GM12878 (cell line): ENCODE measurements at regions of chr6 and their contacts with region 1.

Region 1: GRCh38 chr6:158417760-158418098 is 105.5 kb downstream of the TULP4 start:
- DNase-seq: no peak
- ATAC-seq: no peak
- H3K4me3 ChIP-seq: no peak overlapping the region
- H3K27ac ChIP-seq: no peak overlapping the region
- H3K4me1 ChIP-seq: no peaks in the 10 kb centered on the region
- H3K27me3 ChIP-seq: no peaks in the 10 kb centered on the region
- CTCF ChIP-seq: no peak
- EP300 ChIP-seq: no peak
- POLR2A ChIP-seq: no peak
- RAD21 ChIP-seq: no peak

Region 2: GRCh38 chr6:158439255-158439654 is 21.5 kb after region 1 on chr6:
- CTCF ChIA-PET with region 1: no interaction called
- POLR2A ChIA-PET with region 1: no interaction called
- RAD21 ChIA-PET with region 1: no interaction called
- SMC1A ChIA-PET with region 1: interaction called, 10 read pairs
- in situ Hi-C with region 1: no loop called
- intact Hi-C with region 1: no loop called
- DNase-seq: peak; percentile 72
- ATAC-seq: peak; percentile 99
- H3K4me3 ChIP-seq: no peak overlapping the region
- H3K27ac ChIP-seq: no peak overlapping the region
- H3K4me1 ChIP-seq: peaks cover 5% of the 10 kb centered on the region
- H3K27me3 ChIP-seq: no peaks in the 10 kb centered on the region
- CTCF ChIP-seq: no peak
- EP300 ChIP-seq: peak; percentile 65 to 81; a peak in 3 of 4 replicates
- POLR2A ChIP-seq: no peak
- RAD21 ChIP-seq: no peak

Region 3: GRCh38 chr6:158471339-158471738 is 53.6 kb after region 1 on chr6:
- CTCF ChIA-PET with region 1: no interaction called
- POLR2A ChIA-PET with region 1: no interaction called
- RAD21 ChIA-PET with region 1: no interaction called
- SMC1A ChIA-PET with region 1: no interaction called
- in situ Hi-C with region 1: no loop called
- intact Hi-C with region 1: no loop called
- DNase-seq: no peak
- ATAC-seq: no peak
- H3K4me3 ChIP-seq: no peak overlapping the region
- H3K27ac ChIP-seq: no peak overlapping the region
- H3K4me1 ChIP-seq: peaks cover 26% of the 10 kb centered on the region
- H3K27me3 ChIP-seq: no peaks in the 10 kb centered on the region
- CTCF ChIP-seq: no peak
- EP300 ChIP-seq: no peak
- POLR2A ChIP-seq: no peak
- RAD21 ChIP-seq: no peak